ENCODE measurements at regions of chr5 and their contacts with region 1.

Region 1: DNA sequence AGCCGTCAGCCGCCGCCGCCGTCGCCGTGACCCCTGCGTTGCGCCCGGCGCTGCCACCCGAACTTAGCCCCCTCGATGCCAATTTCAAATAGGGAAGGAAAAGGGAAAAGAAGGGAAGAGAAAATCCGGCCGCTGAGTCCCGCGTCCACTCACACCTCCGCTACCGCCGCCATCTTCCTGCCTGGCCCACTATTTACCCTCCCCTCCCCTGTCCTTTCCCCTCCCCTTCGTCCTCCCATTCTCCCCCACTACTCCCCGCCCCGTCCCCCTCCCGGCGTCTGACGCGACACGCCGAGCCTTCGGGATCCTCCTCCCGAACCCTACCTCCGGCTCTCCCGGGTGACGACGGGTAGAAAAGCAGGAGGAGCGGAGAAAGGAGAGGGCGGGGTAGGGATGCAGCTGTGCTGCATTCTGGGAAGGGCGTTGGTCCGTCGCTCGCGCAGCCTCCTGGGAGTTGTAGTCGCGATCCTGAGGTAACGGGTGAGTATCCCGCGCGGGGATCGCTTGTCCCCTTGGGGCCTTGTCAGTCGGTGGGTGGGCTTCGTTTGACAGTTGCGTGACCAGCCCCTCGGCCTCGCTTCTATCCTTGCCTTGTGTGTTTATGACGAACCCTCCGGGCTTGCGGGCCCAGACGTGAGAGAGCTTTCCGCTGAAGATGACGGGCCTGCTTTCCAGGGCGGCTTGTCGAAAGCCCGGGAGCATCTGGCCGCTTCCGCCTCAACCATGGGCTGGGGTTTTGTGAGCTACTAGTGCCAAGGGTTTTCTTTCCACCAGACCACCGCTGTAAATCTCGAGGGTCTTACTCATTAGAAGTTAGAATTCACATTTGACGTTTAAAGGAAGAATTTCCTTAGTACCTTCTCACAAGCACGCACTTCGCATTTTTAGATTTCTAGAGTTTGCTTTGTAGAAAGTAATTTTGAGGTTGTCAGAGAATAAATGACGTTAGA is at the starts of genes CERT1 and POLK:
- DNase-seq: peak; percentile 70 to 94 (median 90)
- ATAC-seq: peak; percentile 95
- H3K4me3 ChIP-seq: peak within 1 kb of the TSS; percentile 78
- H3K4me3 Mint-ChIP-seq: peak within 1 kb of the TSS; percentile 89 to 97 (median 94)
- H3K27ac ChIP-seq: peak within 1 kb of the TSS; percentile 75
- H3K27ac Mint-ChIP-seq: peak within 1 kb of the TSS; percentile 84 to 98 (median 93)
- H3K4me1 ChIP-seq: peaks cover 14 to 28% of the 10 kb centered on the region in 2 donors
- H3K4me1 Mint-ChIP-seq: peaks cover 29 to 77% (median 54%) of the 10 kb centered on the region in 7 donors
- H3K27me3 ChIP-seq: no peaks in the 10 kb centered on the region
- H3K27me3 Mint-ChIP-seq: no peaks in the 10 kb centered on the region
- total RNA-seq, gene CERT1: 34.4 to 60.4 (median 39.3) TPM
- total RNA-seq, gene POLK: 20.6 to 36.6 (median 24.9) TPM

Region 2: DNA sequence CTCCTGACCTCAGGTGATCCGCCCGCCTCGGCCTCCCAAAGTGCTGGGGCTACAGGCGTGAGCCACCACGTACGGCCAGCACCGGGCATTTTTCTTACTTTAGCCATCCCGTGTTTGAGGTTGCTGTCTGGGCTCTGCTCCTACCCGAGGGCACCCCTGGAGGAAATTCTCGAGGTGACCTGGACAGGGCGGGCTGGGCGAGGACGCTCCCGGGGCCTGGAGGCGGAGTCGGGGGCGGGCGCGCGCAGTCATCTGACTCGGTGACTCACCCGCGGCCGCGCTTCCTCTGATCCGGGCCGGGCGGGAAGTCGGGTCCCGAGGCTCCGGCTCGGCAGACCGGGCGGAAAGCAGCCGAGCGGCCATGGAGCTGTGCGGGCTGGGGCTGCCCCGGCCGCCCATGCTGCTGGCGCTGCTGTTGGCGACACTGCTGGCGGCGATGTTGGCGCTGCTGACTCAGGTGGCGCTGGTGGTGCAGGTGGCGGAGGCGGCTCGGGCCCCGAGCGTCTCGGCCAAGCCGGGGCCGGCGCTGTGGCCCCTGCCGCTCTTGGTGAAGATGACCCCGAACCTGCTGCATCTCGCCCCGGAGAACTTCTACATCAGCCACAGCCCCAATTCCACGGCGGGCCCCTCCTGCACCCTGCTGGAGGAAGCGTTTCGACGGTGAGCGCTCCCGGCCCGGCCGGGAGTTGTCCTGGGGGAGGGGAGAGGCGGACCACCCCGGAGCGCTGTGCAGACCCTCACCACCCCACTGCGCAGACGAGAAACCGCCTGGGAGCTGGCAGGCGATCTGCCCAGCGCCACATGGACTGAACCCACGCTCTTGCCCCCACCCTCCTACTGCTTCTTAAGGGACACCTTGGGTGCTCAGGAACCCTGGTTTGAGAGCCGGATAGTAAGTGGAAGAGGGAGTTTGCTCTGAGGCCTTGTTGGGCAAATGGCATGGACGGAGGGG is 826.5 kb before region 1 on chr5 and contains the start of gene HEXB:
- CTCF ChIA-PET with region 1: no interaction called
- POLR2A ChIA-PET with region 1: no interaction called
- intact Hi-C with region 1: loop called (anchors 1 to 2 kb)
- DNase-seq: peak; percentile 55 to 89 (median 69)
- ATAC-seq: peak; percentile 91
- H3K4me3 ChIP-seq: peak within 1 kb of the TSS; percentile 86
- H3K4me3 Mint-ChIP-seq: peak within 1 kb of the TSS; percentile 76 to 92 (median 86)
- H3K27ac ChIP-seq: peak within 1 kb of the TSS; percentile 78
- H3K27ac Mint-ChIP-seq: peak within 1 kb of the TSS; percentile 76 to 92 (median 86)
- H3K4me1 ChIP-seq: peaks cover 7 to 13% of the 10 kb centered on the region in 2 donors
- H3K4me1 Mint-ChIP-seq: peaks cover 16 to 34% (median 30%) of the 10 kb centered on the region in 7 donors
- H3K27me3 ChIP-seq: no peaks in the 10 kb centered on the region
- H3K27me3 Mint-ChIP-seq: peaks cover 0 to 17% (median 0%) of the 10 kb centered on the region in 5 donors
- total RNA-seq, gene HEXB: 37.7 to 88.9 (median 64.2) TPM

Region 3: DNA sequence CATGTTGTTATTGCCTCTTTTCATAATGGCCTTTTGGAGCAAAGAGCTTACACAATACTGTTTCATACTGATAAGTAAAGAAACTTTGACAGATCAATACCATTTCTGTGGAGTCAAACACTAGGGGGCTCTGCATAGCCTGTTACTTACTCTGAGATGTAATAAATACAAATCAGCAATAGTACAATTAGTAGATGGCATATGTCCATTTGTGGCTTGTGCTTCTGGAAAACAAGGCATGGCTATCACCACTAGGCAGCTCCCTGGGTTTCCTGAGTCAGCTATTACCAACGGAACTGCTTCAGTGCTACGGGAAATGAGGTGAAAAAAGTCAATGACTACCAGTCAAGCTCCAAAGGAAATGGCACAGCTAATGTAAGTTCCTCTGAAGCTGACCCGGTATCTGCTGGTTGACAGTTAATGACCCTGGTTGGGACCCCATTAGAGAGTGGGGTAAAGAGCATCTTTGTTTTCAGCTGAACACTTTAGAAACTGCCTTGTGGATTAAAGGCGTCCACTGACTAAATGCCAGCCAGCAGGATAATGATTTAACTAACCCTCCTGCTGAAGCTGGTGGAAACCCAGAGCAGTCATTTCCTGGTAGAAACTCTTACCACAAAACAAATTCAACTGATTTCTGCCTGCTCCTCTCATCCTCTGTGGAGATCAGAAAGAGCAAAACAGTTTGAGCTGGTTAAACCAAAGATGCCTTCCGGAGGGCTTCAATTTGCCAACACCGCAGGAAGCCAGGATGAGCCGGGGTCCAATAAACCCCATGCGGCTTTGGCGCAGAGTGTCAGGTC is 576.6 kb before region 1 on chr5:
- CTCF ChIA-PET with region 1: no interaction called
- POLR2A ChIA-PET with region 1: no interaction called
- intact Hi-C with region 1: loop called in 1 of 2 experiments (anchors 10 kb)
- DNase-seq: peak in 8 of 9 donors; percentile 14 to 65 (median 44)
- ATAC-seq: peak; percentile 79
- H3K4me3 ChIP-seq: peak overlapping the region; percentile 34
- H3K4me3 Mint-ChIP-seq: peak overlapping the region; percentile 65 to 84 (median 76)
- H3K27ac ChIP-seq: peak overlapping the region; percentile 50
- H3K27ac Mint-ChIP-seq: peak overlapping the region; percentile 52 to 89 (median 85)
- H3K4me1 ChIP-seq: peaks cover 9 to 20% of the 10 kb centered on the region in 2 donors
- H3K4me1 Mint-ChIP-seq: peaks cover 13 to 50% (median 42%) of the 10 kb centered on the region in 7 donors
- H3K27me3 ChIP-seq: no peaks in the 10 kb centered on the region
- H3K27me3 Mint-ChIP-seq: peaks cover 0 to 6% (median 0%) of the 10 kb centered on the region in 5 donors

Region 4: GRCh38 chr5:75395277-75395676 is 116.4 kb before region 1 on chr5:
- CTCF ChIA-PET with region 1: no interaction called
- POLR2A ChIA-PET with region 1: no interaction called
- intact Hi-C with region 1: loop called in 1 of 2 experiments (anchors 5 kb)
- DNase-seq: no peak
- ATAC-seq: no peak
- H3K4me3 ChIP-seq: no peak overlapping the region
- H3K4me3 Mint-ChIP-seq: no peak overlapping the region
- H3K27ac ChIP-seq: no peak overlapping the region
- H3K27ac Mint-ChIP-seq: no peak overlapping the region
- H3K4me1 ChIP-seq: no peaks in the 10 kb centered on the region
- H3K4me1 Mint-ChIP-seq: no peaks in the 10 kb centered on the region
- H3K27me3 ChIP-seq: no peaks in the 10 kb centered on the region
- H3K27me3 Mint-ChIP-seq: no peaks in the 10 kb centered on the region

Region 5: GRCh38 chr5:75405296-75405695 is 106.4 kb before region 1 on chr5:
- CTCF ChIA-PET with region 1: no interaction called
- POLR2A ChIA-PET with region 1: no interaction called
- intact Hi-C with region 1: no loop called
- DNase-seq: no peak
- ATAC-seq: no peak
- H3K4me3 ChIP-seq: no peak overlapping the region
- H3K4me3 Mint-ChIP-seq: no peak overlapping the region
- H3K27ac ChIP-seq: no peak overlapping the region
- H3K27ac Mint-ChIP-seq: peak overlapping the region in 3 of 9 donors; percentile 3 to 8 (median 5)
- H3K4me1 ChIP-seq: no peaks in the 10 kb centered on the region
- H3K4me1 Mint-ChIP-seq: peaks cover 0 to 6% (median 0%) of the 10 kb centered on the region in 7 donors
- H3K27me3 ChIP-seq: no peaks in the 10 kb centered on the region
- H3K27me3 Mint-ChIP-seq: no peaks in the 10 kb centered on the region

Region 6: DNA sequence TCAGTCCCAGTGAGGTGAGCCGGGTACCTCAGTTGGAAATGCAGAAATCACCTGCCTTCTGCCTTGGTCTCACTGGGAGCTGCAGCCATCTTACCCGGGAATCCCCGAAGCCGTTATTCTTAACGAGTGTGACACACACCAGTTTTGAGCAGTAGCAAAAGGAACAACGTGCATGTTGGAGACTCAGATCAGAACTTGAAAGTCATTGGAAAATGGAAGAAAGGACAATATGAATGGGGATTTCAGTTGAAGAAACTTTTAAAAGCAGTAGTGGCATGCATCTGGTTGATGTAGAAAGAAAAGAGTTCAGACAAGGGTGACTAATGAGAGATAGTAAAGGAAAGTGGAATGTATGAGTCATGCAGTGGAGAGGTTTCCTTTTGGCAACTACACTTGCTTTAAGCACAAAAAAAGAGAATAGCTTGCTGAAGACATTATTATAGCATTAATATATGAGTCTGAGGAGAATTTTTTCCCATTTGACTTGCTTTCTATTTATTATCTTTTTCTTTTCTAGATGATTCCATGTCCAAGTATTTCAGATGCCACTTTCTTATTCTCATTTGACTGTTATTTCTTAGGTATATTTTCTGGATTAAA is 55.1 kb after region 1 on chr5:
- CTCF ChIA-PET with region 1: no interaction called
- POLR2A ChIA-PET with region 1: no interaction called
- intact Hi-C with region 1: loop called (anchors 1 to 5 kb)
- DNase-seq: peak in 1 of 9 donors; percentile 66
- ATAC-seq: peak; percentile 84
- H3K4me3 ChIP-seq: no peak overlapping the region
- H3K4me3 Mint-ChIP-seq: peak overlapping the region in 3 of 10 donors; percentile 4 to 76 (median 22)
- H3K27ac ChIP-seq: no peak overlapping the region
- H3K27ac Mint-ChIP-seq: peak overlapping the region in 3 of 9 donors; percentile 57 to 90 (median 57)
- H3K4me1 ChIP-seq: peaks cover 0 to 5% of the 10 kb centered on the region in 2 donors
- H3K4me1 Mint-ChIP-seq: peaks cover 6 to 42% (median 25%) of the 10 kb centered on the region in 7 donors
- H3K27me3 ChIP-seq: no peaks in the 10 kb centered on the region
- H3K27me3 Mint-ChIP-seq: no peaks in the 10 kb centered on the region

Region 7: GRCh38 chr5:75717082-75717922 is 205.6 kb after region 1 on chr5 and contains the start of gene POC5:
- CTCF ChIA-PET with region 1: no interaction called
- POLR2A ChIA-PET with region 1: no interaction called
- intact Hi-C with region 1: loop called (anchors 1 kb)
- DNase-seq: peak; percentile 93 to 99 (median 98)
- ATAC-seq: peak; percentile 97
- H3K4me3 ChIP-seq: peak within 1 kb of the TSS; percentile 74
- H3K4me3 Mint-ChIP-seq: peak within 1 kb of the TSS; percentile 93 to 100 (median 99)
- H3K27ac ChIP-seq: peak within 1 kb of the TSS; percentile 78
- H3K27ac Mint-ChIP-seq: peak within 1 kb of the TSS; percentile 92 to 100 (median 97)
- H3K4me1 ChIP-seq: peaks cover 5 to 8% of the 10 kb centered on the region in 2 donors
- H3K4me1 Mint-ChIP-seq: peaks cover 26 to 47% (median 37%) of the 10 kb centered on the region in 7 donors
- H3K27me3 ChIP-seq: no peaks in the 10 kb centered on the region
- H3K27me3 Mint-ChIP-seq: peaks cover 0 to 10% (median 0%) of the 10 kb centered on the region in 5 donors
- total RNA-seq, gene POC5: 8.5 to 17.9 (median 15.0) TPM